Sigmoid colon (tissue), 7 donors: ENCODE measurements at regions of chr16 and their contacts with region 1.

Region 1: GRCh38 chr16:77722309-77723107 is at the start of gene NUDT7:
- DNase-seq: peak; percentile 99
- H3K4me3 ChIP-seq: peak within 1 kb of the TSS; percentile 62 to 85 (median 80)
- H3K27ac ChIP-seq: peak within 1 kb of the TSS; percentile 84 to 91 (median 88)
- H3K4me1 ChIP-seq: peaks cover 0 to 14% (median 9%) of the 10 kb centered on the region in 4 donors
- H3K27me3 ChIP-seq: no peaks in the 10 kb centered on the region
- CTCF ChIP-seq: peak in 1 of 4 experiments; percentile 26
- EP300 ChIP-seq: no peak
- POLR2A ChIP-seq: peak in 1 of 2 donors; percentile 61
- total RNA-seq, gene NUDT7: 5.7 to 17.9 (median 12.2) TPM

Region 2: GRCh38 chr16:77190478-77191258 is 531.8 kb before region 1 on chr16 and contains the start of gene MON1B:
- intact Hi-C with region 1: loop called (anchors 10 kb)
- DNase-seq: peak; percentile 99
- H3K4me3 ChIP-seq: peak within 1 kb of the TSS; percentile 69 to 90 (median 88)
- H3K27ac ChIP-seq: peak within 1 kb of the TSS; percentile 89 to 97 (median 91)
- H3K4me1 ChIP-seq: peaks cover 0 to 23% (median 18%) of the 10 kb centered on the region in 4 donors
- H3K27me3 ChIP-seq: no peaks in the 10 kb centered on the region
- CTCF ChIP-seq: no peak
- EP300 ChIP-seq: peak in 1 of 4 donors; percentile 48
- POLR2A ChIP-seq: peak; percentile 27 to 81
- total RNA-seq, gene MON1B: 12.8 to 19.4 (median 13.5) TPM

Region 3: GRCh38 chr16:78099372-78100161 is 377.1 kb after region 1 on chr16 and contains the start of gene WWOX:
- intact Hi-C with region 1: loop called (anchors 5 kb)
- DNase-seq: peak; percentile 98
- H3K4me3 ChIP-seq: peak within 1 kb of the TSS; percentile 70 to 96 (median 90)
- H3K27ac ChIP-seq: peak within 1 kb of the TSS; percentile 85 to 94 (median 91)
- H3K4me1 ChIP-seq: peaks cover 0 to 14% (median 7%) of the 10 kb centered on the region in 4 donors
- H3K27me3 ChIP-seq: no peaks in the 10 kb centered on the region
- CTCF ChIP-seq: peak in 3 of 4 experiments; percentile 51 to 85 (median 62)
- EP300 ChIP-seq: no peak
- POLR2A ChIP-seq: no peak
- total RNA-seq, gene WWOX: 16.1 to 46.8 (median 36.5) TPM